Cardiac septum (tissue), 1 donor: ENCODE measurements at regions of chr18 and their contacts with region 1.

Region 1: GRCh38 chr18:32930695-32931301 is 158.0 kb upstream of the KLHL14 start:
- DNase-seq: no peak

Region 2: DNA sequence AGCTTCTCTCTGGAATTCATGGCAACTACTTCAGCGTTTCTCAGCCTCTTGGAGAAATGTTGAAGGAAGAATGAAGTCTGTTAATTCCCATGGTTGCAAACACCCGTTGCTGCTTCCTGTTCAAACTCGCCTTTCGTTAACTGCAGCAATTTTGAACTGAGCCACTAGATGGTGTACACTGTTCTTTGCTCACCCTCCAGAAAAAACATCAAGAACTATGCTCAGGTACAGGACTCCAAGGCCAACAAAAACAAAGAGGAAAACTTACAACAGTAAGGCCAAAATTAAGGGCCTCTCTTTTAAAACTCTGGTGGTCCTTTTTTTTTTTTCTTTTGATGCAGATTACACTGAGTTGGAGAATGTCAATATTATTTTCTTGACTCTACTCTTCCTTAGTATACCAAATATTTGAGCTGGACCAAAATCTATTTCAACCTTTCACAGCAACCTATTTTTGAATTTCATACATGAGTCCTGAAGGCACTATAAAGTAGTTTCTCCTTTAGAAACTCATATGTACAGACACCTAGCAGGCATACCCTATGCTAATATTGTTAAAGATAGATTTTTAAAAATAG is 216.1 kb before region 1 on chr18:
- intact Hi-C with region 1: loop called (anchors 10 kb)
- DNase-seq: no peak

Region 3: GRCh38 chr18:33169218-33169617 is 238.4 kb after region 1 on chr18:
- intact Hi-C with region 1: no loop called
- DNase-seq: no peak